Activated CD8-positive, alpha-beta T cell treated with anti-CD3 and anti-CD28 coated beads, Interleukin-2, amount 10 ng/mL, durations not matched to agents 7 days and 5 days (primary cell): ENCODE measurements at regions of chr6 and their contacts with region 1.

Region 1: DNA sequence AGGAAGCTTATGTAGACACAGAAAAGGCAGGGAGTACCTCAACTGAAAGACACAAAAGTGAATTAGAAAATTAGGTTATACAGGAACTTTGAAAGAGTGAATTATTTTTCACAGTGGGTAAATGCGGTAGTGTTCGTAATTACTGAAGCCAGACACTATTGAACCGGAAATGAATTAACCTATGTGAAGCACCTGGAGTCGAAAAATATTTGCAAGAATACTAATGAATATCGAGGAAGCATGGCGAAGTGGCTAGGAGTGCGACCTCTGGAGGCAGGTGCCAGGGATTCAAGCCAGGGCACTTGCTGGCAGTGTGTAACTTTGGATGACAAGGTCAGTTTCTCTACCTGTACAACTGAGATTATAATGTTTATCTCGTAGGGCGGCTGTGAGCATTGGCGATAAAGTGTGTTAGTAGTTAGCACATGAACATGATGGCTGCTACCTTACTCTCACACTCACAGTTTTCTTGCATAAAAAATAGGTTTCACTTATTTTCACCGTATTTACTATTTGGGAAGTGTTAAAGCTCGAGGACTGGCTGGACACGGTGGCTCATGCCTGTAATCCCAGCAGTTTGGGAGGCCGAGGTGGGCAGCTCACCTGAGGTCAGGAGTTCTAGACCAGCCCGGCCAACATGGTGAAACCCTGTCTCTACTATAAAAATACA is 567 bp upstream of the SLC18B1 start:
- DNase-seq: peak; percentile 75
- ATAC-seq: peak; percentile 86
- H3K4me3 Mint-ChIP-seq: no peak overlapping the region
- H3K27ac Mint-ChIP-seq: no peak overlapping the region
- H3K4me1 Mint-ChIP-seq: peaks cover 10% of the 10 kb centered on the region
- H3K27me3 Mint-ChIP-seq: peaks cover 2% of the 10 kb centered on the region

Region 2: GRCh38 chr6:132530293-132530974 is 268.6 kb before region 1 on chr6:
- CTCF ChIA-PET with region 1: interaction called, 10 read pairs
- POLR2A ChIA-PET with region 1: no interaction called
- DNase-seq: peak; percentile 85
- ATAC-seq: peak; percentile 86
- H3K4me3 Mint-ChIP-seq: no peak overlapping the region
- H3K27ac Mint-ChIP-seq: no peak overlapping the region
- H3K4me1 Mint-ChIP-seq: peaks cover 2% of the 10 kb centered on the region
- H3K27me3 Mint-ChIP-seq: peaks cover 23% of the 10 kb centered on the region

Region 3: GRCh38 chr6:132669690-132670291 is 129.2 kb before region 1 on chr6:
- CTCF ChIA-PET with region 1: interaction called, 25 read pairs
- POLR2A ChIA-PET with region 1: no interaction called
- DNase-seq: no peak
- ATAC-seq: peak; percentile 60
- H3K4me3 Mint-ChIP-seq: no peak overlapping the region
- H3K27ac Mint-ChIP-seq: no peak overlapping the region
- H3K4me1 Mint-ChIP-seq: peaks cover 18% of the 10 kb centered on the region
- H3K27me3 Mint-ChIP-seq: peaks cover 11% of the 10 kb centered on the region

Region 4: GRCh38 chr6:132780770-132781371 is 18.1 kb before region 1 on chr6:
- CTCF ChIA-PET with region 1: interaction called, 10 read pairs
- POLR2A ChIA-PET with region 1: no interaction called
- DNase-seq: peak; percentile 42
- ATAC-seq: peak; percentile 80
- H3K4me3 Mint-ChIP-seq: no peak overlapping the region
- H3K27ac Mint-ChIP-seq: no peak overlapping the region
- H3K4me1 Mint-ChIP-seq: peaks cover 3% of the 10 kb centered on the region
- H3K27me3 Mint-ChIP-seq: no peaks in the 10 kb centered on the region

Region 5: DNA sequence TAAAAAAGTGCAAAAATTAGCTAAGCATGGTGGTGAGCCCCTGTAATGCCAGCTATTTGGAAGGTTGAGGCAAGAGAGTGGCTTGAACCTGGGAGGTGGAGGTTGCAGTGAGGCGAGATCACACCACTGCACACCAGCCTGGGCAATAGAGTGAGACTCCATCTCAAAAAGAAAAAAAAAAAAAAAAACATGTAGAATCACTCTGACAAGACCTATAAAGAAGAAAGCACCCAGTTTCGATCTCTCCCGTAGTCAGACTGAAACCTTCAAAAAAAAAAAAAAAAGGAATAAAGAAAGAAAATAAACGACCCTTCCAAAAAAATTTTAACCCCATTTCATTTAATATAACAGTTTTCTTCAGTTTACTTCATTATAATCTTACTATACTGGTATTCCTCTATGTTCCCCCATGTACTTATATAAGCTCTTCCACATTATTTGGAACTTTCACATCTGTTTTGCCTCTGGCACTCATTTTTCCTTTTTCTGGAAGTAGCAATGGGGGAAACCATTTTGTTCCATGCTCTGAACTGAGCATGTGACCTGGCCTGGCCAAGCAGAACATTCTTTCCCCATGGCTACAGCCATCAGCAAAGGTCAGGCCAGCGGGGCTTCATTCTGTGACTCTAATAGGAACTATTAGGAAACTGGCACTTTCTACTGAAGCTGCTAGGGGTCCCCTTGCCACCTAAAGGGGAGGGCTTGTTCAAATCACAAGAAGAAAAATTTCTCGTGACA is 10.2 kb before region 1 on chr6:
- CTCF ChIA-PET with region 1: interaction called, 10 read pairs
- POLR2A ChIA-PET with region 1: no interaction called
- DNase-seq: no peak
- ATAC-seq: no peak
- H3K4me3 Mint-ChIP-seq: no peak overlapping the region
- H3K27ac Mint-ChIP-seq: no peak overlapping the region
- H3K4me1 Mint-ChIP-seq: peaks cover 12% of the 10 kb centered on the region
- H3K27me3 Mint-ChIP-seq: no peaks in the 10 kb centered on the region

Region 6: GRCh38 chr6:132813173-132813856 is 14.3 kb after region 1 on chr6:
- CTCF ChIA-PET with region 1: interaction called, 102 read pairs
- POLR2A ChIA-PET with region 1: interaction called, 80 read pairs
- DNase-seq: peak; percentile 49
- ATAC-seq: peak; percentile 23
- H3K4me3 Mint-ChIP-seq: peak overlapping the region; percentile 89
- H3K27ac Mint-ChIP-seq: peak overlapping the region; percentile 97
- H3K4me1 Mint-ChIP-seq: peaks cover 41% of the 10 kb centered on the region
- H3K27me3 Mint-ChIP-seq: peaks cover 10% of the 10 kb centered on the region

Region 7: DNA sequence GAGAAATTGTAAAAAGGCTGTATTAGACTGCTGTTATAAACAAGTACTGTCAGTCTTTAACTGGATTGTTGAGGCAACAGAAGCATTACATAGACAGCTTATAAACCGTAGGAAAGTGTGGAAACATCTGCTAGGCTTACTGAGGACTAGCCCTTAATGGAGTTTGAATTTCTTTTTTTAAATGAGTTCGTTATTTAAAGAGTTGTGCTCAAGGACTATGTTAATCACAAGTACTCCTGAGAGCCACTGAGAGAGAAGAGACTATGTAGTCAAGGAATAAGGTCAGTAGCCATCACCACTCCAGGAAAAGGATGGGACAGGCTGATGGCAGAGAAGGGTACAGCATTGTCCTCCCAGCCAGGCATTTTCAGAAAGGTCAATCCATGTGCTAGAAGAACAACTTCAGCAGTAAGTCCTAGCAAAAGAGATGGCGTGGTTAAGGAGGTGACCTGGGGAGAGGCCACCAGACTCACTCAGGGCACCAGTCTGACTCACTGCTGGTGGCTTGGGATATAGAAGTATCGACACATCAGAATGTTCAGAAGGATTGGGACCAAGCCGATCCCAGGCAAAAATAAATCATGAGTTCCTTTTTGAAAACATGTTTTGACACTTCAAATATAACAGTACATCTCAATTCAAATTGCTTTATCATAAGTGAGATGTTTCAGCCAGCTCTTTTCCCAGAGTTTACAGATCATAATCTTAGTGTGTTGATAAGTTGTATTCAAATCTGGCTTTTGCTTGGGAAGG is 21.8 kb after region 1 on chr6:
- CTCF ChIA-PET with region 1: interaction called, 102 read pairs
- POLR2A ChIA-PET with region 1: interaction called, 80 read pairs
- DNase-seq: no peak
- ATAC-seq: peak; percentile 15
- H3K4me3 Mint-ChIP-seq: no peak overlapping the region
- H3K27ac Mint-ChIP-seq: no peak overlapping the region
- H3K4me1 Mint-ChIP-seq: peaks cover 43% of the 10 kb centered on the region
- H3K27me3 Mint-ChIP-seq: no peaks in the 10 kb centered on the region